Activated CD4-positive, alpha-beta T cell treated with anti-CD3 and anti-CD28 coated beads, Interleukin-2, amount 10 ng/mL, durations not matched to agents 24 days and 14 days (primary cell): ENCODE measurements at regions of chr9 and their contacts with region 1.

Region 1: DNA sequence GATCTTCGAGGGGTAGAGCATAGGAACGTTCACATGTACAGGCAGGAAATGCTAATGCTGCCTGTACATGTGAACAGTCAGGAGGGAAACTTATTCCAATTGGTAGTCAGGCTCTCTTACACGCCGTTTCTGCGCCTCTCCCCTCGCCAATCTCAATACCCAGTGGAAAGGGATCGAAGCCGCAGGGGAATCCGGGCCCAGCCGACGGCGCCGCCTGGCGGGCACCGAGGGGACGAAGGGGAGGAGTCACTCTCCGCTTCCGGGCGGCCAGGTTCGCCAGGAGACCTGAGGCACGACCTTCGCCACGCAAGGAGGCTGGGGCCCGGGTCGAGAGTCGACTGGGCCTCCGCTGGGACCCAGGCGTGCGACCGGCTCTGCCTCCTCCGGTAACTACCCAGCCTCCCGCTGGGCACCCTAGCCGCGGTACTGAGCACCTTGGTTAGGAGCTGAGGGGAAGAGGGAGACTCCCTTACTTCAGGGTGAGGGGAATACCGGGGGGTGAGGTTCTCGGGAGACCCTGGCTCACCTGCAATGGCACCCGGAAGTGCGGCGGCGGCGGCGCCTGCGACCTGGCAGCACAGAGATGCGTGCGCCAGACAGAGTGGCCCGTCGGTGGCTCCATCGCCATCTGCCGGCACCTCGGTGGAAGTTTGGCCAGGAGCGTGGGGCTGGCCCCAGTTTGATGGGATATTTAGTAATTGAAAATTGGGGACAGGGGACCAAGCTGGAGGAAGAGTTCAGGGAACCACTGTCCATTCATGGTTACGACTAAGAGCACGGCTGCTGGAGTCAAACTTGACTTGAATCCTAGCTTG is at the start of gene PIGO:
- DNase-seq: peak; percentile 97
- H3K4me3 Mint-ChIP-seq: peak within 1 kb of the TSS; percentile 91
- H3K27ac Mint-ChIP-seq: peak within 1 kb of the TSS; percentile 95
- H3K4me1 Mint-ChIP-seq: peaks cover 28% of the 10 kb centered on the region
- H3K27me3 Mint-ChIP-seq: no peaks in the 10 kb centered on the region
- total RNA-seq, gene PIGO: 32.5 and 37.2 TPM in 2 replicates

Region 2: DNA sequence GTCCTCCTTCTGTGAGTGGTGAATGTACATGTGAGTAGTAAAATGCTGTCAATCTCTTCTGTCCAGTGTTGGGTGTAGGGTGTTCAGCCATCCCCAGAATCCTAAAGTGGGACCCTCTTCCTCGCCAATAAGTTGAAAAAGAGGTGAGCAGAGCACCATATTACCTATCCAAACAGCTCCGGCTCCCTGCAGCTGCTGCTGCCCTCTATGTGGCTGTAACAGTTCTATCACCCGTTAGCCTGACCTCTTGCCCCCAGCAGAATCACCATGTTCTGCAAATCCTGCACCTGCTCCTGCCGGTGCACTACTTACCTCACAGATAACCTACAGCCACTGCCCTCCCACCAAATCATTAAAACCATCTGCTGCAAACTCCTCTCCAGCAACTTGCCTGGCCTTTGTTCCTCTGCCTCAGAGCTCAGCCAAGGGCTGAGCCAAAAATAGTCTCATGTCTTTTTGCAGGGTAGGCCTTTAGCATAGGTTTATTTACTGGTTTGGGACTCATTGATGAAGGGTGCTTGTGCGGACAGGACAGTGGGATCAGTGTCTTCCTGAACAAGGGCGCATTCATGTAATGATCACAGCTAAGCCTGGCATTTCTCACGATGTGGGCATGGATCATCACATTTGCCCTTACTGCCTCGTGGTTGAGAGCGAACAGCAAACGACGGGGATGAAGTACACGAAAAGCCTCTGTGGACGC is 336.7 kb before region 1 on chr9:
- intact Hi-C with region 1: no loop called
- DNase-seq: no peak
- H3K4me3 Mint-ChIP-seq: no peak overlapping the region
- H3K27ac Mint-ChIP-seq: no peak overlapping the region
- H3K4me1 Mint-ChIP-seq: peaks cover 4% of the 10 kb centered on the region
- H3K27me3 Mint-ChIP-seq: peaks cover 39% of the 10 kb centered on the region

Region 3: GRCh38 chr9:35071814-35072460 is 24.3 kb before region 1 on chr9:
- intact Hi-C with region 1: loop called (anchors 1 kb)
- DNase-seq: peak; percentile 93
- H3K4me3 Mint-ChIP-seq: peak overlapping the region; percentile 95
- H3K27ac Mint-ChIP-seq: peak overlapping the region; percentile 94
- H3K4me1 Mint-ChIP-seq: peaks cover 46% of the 10 kb centered on the region
- H3K27me3 Mint-ChIP-seq: no peaks in the 10 kb centered on the region

Region 4: GRCh38 chr9:35079426-35080341 is 16.6 kb before region 1 on chr9 and contains the start of gene FANCG:
- intact Hi-C with region 1: loop called (anchors 1 kb)
- DNase-seq: peak; percentile 96
- H3K4me3 Mint-ChIP-seq: peak within 1 kb of the TSS; percentile 99
- H3K27ac Mint-ChIP-seq: peak within 1 kb of the TSS; percentile 100
- H3K4me1 Mint-ChIP-seq: peaks cover 30% of the 10 kb centered on the region
- H3K27me3 Mint-ChIP-seq: no peaks in the 10 kb centered on the region
- total RNA-seq, gene FANCG: 114 and 122 TPM in 2 replicates